T-cell (primary cell): ENCODE measurements at regions of chr19 and their contacts with region 1.

Region 1: DNA sequence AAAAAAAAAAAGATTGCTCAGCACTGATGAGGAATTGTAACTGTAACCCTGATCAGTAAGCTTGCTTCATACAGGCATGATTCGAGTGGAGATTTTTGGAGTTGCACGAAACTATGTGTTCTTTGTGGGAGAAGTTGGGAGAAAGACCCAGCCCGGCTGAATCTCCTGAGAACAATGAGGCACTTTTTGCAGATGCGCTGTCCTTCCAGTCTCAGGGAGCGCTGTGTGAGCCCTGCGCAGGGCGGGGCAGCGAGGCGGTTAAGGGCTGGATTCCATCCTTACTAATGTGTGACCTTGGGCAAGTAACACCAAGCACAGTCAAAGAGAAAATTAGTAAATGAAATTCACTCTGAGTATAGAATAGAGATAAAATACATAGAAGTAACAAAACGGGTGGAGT is 76.9 kb downstream of the SIPA1L3 start:
- DNase-seq: no peak
- ATAC-seq: no peak
- H3K4me3 ChIP-seq: no peak overlapping the region
- H3K4me3 Mint-ChIP-seq: no peak overlapping the region
- H3K27ac ChIP-seq: no peak overlapping the region
- H3K27ac Mint-ChIP-seq: no peak overlapping the region
- H3K4me1 ChIP-seq: peaks cover 2 to 14% of the 10 kb centered on the region in 2 experiments
- H3K4me1 Mint-ChIP-seq: peaks cover 32 to 44% (median 32%) of the 10 kb centered on the region in 3 donors
- H3K27me3 ChIP-seq: no peaks in the 10 kb centered on the region
- H3K27me3 Mint-ChIP-seq: no peaks in the 10 kb centered on the region

Region 2: DNA sequence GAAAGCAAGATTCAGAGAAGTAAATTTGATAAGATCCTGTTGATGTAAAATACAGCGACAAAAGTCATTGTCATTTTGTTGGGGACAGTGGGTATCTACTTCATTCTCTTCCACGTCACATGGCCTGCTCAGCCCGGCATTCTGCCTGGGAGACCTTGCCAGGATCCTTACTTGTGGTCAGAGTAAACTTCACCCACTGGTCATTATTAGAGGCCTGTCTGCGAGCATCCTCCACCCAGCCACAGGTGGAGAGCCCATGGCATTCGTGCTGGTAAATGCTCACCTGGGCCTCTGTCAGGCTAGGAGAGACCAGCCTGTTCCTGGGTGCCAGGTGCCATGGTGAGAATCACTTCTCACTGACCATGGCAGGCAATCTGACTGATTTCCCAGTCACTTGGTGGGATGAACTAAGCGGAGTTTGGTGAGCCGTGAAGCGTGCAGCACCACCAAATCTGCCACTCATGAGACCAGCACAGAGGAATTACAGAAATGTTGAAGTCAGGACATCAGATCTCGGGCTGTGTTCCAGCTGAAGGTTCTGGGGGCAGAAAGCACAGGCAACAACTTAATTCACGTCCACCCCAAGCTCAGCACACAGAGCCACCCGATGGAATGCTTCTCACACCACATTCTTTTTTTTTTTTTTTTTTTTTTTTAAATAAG is 30.1 kb after region 1 on chr19:
- CTCF ChIA-PET with region 1: interaction called in 1 of 2 experiments, 12 read pairs
- POLR2A ChIA-PET with region 1: no interaction called
- DNase-seq: no peak
- ATAC-seq: no peak
- H3K4me3 ChIP-seq: no peak overlapping the region
- H3K4me3 Mint-ChIP-seq: no peak overlapping the region
- H3K27ac ChIP-seq: no peak overlapping the region
- H3K27ac Mint-ChIP-seq: no peak overlapping the region
- H3K4me1 ChIP-seq: peaks cover 0 to 4% of the 10 kb centered on the region in 2 experiments
- H3K4me1 Mint-ChIP-seq: peaks cover 5 to 10% (median 8%) of the 10 kb centered on the region in 3 donors
- H3K27me3 ChIP-seq: no peaks in the 10 kb centered on the region
- H3K27me3 Mint-ChIP-seq: no peaks in the 10 kb centered on the region